Vagina (tissue), 2 donors: ENCODE measurements at regions of chr19 and their contacts with region 1.

Region 1: GRCh38 chr19:5186293-5187050 is 154.1 kb downstream of the PTPRS start:
- DNase-seq: no peak
- H3K4me3 ChIP-seq: no peak overlapping the region
- H3K27ac ChIP-seq: no peak overlapping the region
- H3K4me1 ChIP-seq: no peaks in the 10 kb centered on the region
- H3K27me3 ChIP-seq: no peaks in the 10 kb centered on the region
- CTCF ChIP-seq: no peak
- POLR2A ChIP-seq: no peak

Region 2: DNA sequence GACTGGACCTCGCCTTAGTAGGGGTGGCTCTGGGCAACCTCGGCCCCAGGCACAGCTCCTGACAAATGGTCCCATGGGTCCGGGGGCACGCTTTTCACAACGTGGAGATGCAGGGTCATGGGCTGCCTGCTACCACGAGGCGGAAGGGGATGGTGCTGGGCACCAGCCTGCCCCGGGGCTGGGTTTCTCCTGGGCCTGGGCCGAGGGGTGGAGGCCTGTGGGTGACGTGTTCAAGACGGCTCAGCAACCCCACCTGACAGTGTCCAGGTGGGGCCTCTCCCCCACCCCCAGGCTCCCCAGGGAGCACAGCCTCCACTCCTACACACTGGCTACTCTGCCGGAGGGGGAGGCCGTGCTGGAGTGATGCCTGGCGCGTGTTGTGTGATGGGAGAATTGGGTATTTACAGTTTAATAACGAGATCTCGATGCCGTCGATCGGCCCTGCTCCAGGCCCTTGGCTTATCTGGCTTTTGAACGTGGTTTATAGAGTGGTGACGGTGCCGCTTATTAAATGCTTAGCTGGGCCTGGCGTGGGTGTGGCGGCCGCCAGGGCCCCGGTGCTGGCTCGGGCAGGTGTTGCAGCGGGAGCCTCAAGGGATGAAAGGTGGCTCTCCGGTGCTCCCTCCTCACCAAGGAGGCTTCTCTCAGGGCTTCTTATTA is 44.0 kb before region 1 on chr19:
- intact Hi-C with region 1: loop called (anchors 1 kb)
- DNase-seq: no peak
- H3K4me3 ChIP-seq: no peak overlapping the region
- H3K27ac ChIP-seq: no peak overlapping the region
- H3K4me1 ChIP-seq: no peaks in the 10 kb centered on the region
- H3K27me3 ChIP-seq: no peaks in the 10 kb centered on the region
- CTCF ChIP-seq: no peak
- POLR2A ChIP-seq: no peak